Naive thymus-derived CD4-positive, alpha-beta T cell (primary cell): ENCODE measurements at regions of chr17 and their contacts with region 1.

Region 1: DNA sequence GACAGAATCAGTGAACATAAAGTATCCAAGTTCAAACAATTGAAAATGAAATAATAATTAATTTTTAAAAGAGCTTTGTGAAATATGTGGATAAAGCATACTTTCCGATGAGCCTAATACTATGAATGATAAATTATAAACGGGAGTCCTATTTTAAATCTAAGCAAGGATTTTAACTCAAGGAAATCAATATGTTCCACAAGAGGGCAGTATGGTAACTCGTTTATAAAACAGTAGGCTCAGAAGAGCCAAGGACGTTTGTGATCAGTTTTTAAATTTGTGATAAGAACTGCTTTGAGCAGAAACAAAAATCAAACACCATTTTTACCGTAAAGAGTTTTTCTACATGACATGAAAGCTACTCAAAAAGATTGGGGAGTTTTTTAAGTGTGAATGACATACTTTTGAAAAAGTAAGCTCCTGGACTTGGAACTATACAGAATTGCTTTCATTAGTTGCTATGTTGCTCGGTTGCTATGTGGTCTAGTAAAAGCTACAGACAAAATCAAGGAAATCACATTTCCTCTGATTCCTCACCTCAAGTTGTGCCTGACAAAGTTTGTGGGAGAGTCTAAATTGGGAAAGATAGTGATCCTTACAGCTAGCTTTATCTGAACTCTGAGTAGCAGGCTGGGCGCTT is 11.8 kb upstream of the TEKT1 start:
- DNase-seq: peak in 6 of 9 donors; percentile 16 to 50 (median 30)
- ATAC-seq: peak; percentile 70
- H3K4me3 ChIP-seq: no peak overlapping the region
- H3K4me3 Mint-ChIP-seq: no peak overlapping the region
- H3K27ac ChIP-seq: no peak overlapping the region
- H3K27ac Mint-ChIP-seq: no peak overlapping the region
- H3K4me1 ChIP-seq: no peaks in the 10 kb centered on the region
- H3K4me1 Mint-ChIP-seq: peaks cover 0 to 18% (median 0%) of the 10 kb centered on the region in 7 donors
- H3K27me3 ChIP-seq: no peaks in the 10 kb centered on the region
- H3K27me3 Mint-ChIP-seq: peaks cover 27 to 67% (median 43%) of the 10 kb centered on the region in 5 donors

Region 2: DNA sequence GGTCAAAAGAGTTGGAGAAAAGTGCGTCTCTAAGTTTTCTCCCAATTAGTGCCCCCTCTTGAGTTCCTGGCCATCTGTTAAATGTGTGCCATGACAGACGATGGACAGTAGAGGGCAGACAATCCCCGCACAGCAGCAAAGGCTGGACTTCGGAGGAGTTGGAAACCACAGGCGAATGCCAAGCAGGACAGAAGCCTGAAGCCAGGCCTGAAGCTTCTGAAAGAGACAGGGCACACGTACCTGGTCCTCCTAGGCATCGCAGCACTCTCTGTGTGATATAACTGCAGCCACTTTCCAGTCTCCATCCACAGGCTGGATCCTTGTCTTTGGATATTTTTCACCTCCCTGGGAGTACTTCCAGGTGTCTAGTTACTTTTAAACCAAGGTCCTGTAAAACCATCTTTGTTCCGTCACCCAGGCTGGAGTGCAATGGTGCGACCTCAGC is 177.3 kb before region 1 on chr17:
- CTCF ChIA-PET with region 1: interaction called, 7 read pairs
- POLR2A ChIA-PET with region 1: no interaction called
- intact Hi-C with region 1: loop called in 1 of 2 experiments (anchors 10 kb)
- DNase-seq: peak in 3 of 9 donors; percentile 22 to 34 (median 24)
- ATAC-seq: peak; percentile 87
- H3K4me3 ChIP-seq: no peak overlapping the region
- H3K4me3 Mint-ChIP-seq: no peak overlapping the region
- H3K27ac ChIP-seq: no peak overlapping the region
- H3K27ac Mint-ChIP-seq: no peak overlapping the region
- H3K4me1 ChIP-seq: no peaks in the 10 kb centered on the region
- H3K4me1 Mint-ChIP-seq: peaks cover 5 to 25% (median 10%) of the 10 kb centered on the region in 7 donors
- H3K27me3 ChIP-seq: no peaks in the 10 kb centered on the region
- H3K27me3 Mint-ChIP-seq: peaks cover 0 to 15% (median 0%) of the 10 kb centered on the region in 5 donors

Region 3: GRCh38 chr17:6753006-6753445 is 90.3 kb before region 1 on chr17:
- CTCF ChIA-PET with region 1: interaction called, 3 read pairs
- POLR2A ChIA-PET with region 1: no interaction called
- intact Hi-C with region 1: loop called in 1 of 2 experiments (anchors 2 kb)
- DNase-seq: peak in 6 of 9 donors; percentile 4 to 53 (median 36)
- ATAC-seq: no peak
- H3K4me3 ChIP-seq: no peak overlapping the region
- H3K4me3 Mint-ChIP-seq: peak overlapping the region; percentile 13 to 66 (median 44)
- H3K27ac ChIP-seq: peak overlapping the region; percentile 26
- H3K27ac Mint-ChIP-seq: peak overlapping the region; percentile 24 to 100 (median 86)
- H3K4me1 ChIP-seq: peaks cover 26 to 30% of the 10 kb centered on the region in 2 donors
- H3K4me1 Mint-ChIP-seq: peaks cover 37 to 60% (median 48%) of the 10 kb centered on the region in 7 donors
- H3K27me3 ChIP-seq: no peaks in the 10 kb centered on the region
- H3K27me3 Mint-ChIP-seq: peaks cover 0 to 18% (median 0%) of the 10 kb centered on the region in 5 donors

Region 4: DNA sequence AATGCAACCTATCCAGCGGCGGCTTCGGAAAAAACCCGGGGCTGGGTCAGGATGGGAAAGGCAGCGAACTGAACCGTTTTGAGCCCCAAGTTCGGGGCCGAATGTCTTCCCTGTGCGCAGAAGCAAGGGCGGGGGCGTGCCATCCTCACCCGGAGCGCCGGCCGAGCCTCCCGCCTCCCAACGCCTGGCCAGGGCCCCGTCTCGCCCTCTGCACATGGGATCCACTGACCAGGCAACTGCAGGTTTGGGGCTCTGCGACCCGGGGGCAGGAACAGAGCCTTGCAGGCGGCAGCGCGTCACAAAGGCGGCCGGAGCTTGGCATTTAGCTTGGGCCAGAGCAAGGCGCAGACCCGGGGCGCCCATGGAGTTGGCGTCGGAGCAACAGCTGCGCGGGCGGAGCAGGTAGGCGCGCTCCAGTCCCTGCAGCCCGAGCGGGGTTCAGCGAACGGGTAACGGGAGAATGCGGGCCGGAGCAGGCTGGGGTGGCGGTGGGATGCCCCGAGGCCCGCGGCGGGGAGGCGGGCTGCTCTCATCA is 67.4 kb before region 1 on chr17 and contains the start of gene FBXO39:
- CTCF ChIA-PET with region 1: no interaction called
- POLR2A ChIA-PET with region 1: no interaction called
- intact Hi-C with region 1: no loop called
- DNase-seq: no peak
- ATAC-seq: no peak
- H3K4me3 ChIP-seq: no peak within 1 kb of the TSS
- H3K4me3 Mint-ChIP-seq: peak within 1 kb of the TSS in 7 of 10 donors; percentile 11 to 50 (median 39)
- H3K27ac ChIP-seq: no peak within 1 kb of the TSS
- H3K27ac Mint-ChIP-seq: peak within 1 kb of the TSS in 1 of 9 donors; percentile 63
- H3K4me1 ChIP-seq: no peaks in the 10 kb centered on the region
- H3K4me1 Mint-ChIP-seq: peaks cover 0 to 11% (median 6%) of the 10 kb centered on the region in 7 donors
- H3K27me3 ChIP-seq: no peaks in the 10 kb centered on the region
- H3K27me3 Mint-ChIP-seq: peaks cover 0 to 56% (median 35%) of the 10 kb centered on the region in 5 donors
- total RNA-seq, gene FBXO39: 0.30 to 7.4 (median 0.66) TPM

Region 5: DNA sequence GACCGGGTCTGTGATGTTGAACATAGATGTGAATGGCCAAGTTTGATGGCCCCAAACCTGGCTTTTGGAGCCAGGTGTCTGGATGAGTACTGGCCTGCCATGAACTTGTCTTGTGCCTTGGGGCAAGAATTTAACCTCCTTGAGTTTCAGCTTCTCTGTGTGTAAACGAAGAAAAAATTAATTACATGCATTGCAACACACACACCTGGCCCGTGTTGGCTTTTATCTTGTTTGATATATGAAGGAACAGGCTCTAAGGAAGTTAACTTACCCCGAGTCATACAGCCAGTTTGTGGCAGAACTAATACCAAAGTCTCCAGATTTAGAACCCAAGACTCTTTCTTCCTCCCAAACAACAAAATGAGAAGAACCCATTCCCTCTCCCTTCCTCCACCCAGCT is 54.2 kb before region 1 on chr17:
- CTCF ChIA-PET with region 1: no interaction called
- POLR2A ChIA-PET with region 1: no interaction called
- intact Hi-C with region 1: no loop called
- DNase-seq: no peak
- ATAC-seq: no peak
- H3K4me3 ChIP-seq: no peak overlapping the region
- H3K4me3 Mint-ChIP-seq: no peak overlapping the region
- H3K27ac ChIP-seq: no peak overlapping the region
- H3K27ac Mint-ChIP-seq: no peak overlapping the region
- H3K4me1 ChIP-seq: no peaks in the 10 kb centered on the region
- H3K4me1 Mint-ChIP-seq: peaks cover 0 to 10% (median 5%) of the 10 kb centered on the region in 7 donors
- H3K27me3 ChIP-seq: no peaks in the 10 kb centered on the region
- H3K27me3 Mint-ChIP-seq: peaks cover 35 to 70% (median 46%) of the 10 kb centered on the region in 5 donors

Region 6: DNA sequence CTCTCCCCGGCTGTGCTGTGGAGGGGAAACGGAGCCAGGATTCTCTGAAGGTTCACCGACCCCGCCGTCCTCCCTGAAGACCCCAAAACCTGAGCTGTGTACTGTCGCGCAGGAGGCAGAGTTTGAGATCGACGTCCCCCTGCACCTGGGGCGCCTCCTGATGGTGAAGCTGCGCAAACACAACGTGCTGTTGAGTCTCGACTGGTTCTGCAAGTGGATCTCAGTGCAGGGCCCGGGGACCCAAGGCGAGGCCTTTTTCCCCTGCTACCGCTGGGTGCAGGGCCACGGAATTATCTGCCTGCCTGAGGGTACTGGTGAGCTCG is 50.8 kb after region 1 on chr17:
- CTCF ChIA-PET with region 1: interaction called, 5 read pairs
- POLR2A ChIA-PET with region 1: no interaction called
- intact Hi-C with region 1: loop called in 1 of 2 experiments (anchors 10 kb)
- DNase-seq: peak in 2 of 9 donors; percentile 5 to 33
- ATAC-seq: no peak
- H3K4me3 ChIP-seq: no peak overlapping the region
- H3K4me3 Mint-ChIP-seq: peak overlapping the region in 2 of 10 donors; percentile 31 to 48
- H3K27ac ChIP-seq: no peak overlapping the region
- H3K27ac Mint-ChIP-seq: no peak overlapping the region
- H3K4me1 ChIP-seq: no peaks in the 10 kb centered on the region
- H3K4me1 Mint-ChIP-seq: no peaks in the 10 kb centered on the region
- H3K27me3 ChIP-seq: no peaks in the 10 kb centered on the region
- H3K27me3 Mint-ChIP-seq: peaks cover 32 to 59% (median 48%) of the 10 kb centered on the region in 5 donors

Region 7: DNA sequence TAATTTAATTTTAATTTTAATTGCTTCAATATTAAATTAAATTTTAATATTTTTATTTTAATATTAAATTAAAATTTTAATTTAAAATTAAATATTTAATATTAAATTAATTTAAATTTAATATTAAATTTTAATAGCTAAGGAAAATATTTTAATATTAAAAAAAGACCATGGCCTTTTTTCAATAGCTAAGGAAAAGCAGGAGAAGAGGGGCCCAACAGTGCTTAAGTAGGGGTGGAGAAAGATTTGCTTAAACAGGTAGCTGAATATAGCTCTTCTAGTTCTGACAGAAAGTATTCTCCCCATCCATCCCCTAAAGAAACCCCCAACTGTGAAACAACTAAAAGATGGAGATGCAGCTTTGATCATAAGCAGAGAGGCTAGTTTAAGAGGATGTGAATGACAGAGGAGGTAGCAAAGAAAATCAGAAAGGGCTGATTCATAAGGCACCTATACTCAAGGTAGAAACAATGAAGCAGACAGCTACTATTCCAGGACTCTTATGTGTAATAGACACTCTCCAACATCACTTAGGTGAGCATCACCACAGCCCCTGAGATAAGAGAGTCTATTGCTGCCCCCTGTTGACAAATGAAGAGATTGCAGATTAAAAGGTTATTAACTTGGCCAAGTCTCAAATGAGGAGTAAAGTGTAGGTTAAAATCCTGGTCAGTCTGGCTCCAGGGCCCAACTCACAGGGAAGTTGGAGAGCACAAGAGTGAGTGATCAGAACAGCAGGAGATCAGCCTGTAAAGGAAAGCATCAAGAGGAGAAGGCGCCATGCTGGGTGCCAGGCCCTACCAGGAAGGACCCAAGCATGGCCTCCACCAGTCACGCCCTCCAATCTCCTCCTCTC is 161.3 kb after region 1 on chr17:
- CTCF ChIA-PET with region 1: interaction called, 18 read pairs
- POLR2A ChIA-PET with region 1: interaction called, 6 read pairs
- intact Hi-C with region 1: loop called (anchors 1 kb)
- DNase-seq: peak in 7 of 9 donors; percentile 67 to 80 (median 77)
- ATAC-seq: peak; percentile 98
- H3K4me3 ChIP-seq: no peak overlapping the region
- H3K4me3 Mint-ChIP-seq: no peak overlapping the region
- H3K27ac ChIP-seq: no peak overlapping the region
- H3K27ac Mint-ChIP-seq: peak overlapping the region in 8 of 9 donors; percentile 5 to 60 (median 31)
- H3K4me1 ChIP-seq: no peaks in the 10 kb centered on the region
- H3K4me1 Mint-ChIP-seq: peaks cover 14 to 42% (median 27%) of the 10 kb centered on the region in 7 donors
- H3K27me3 ChIP-seq: no peaks in the 10 kb centered on the region
- H3K27me3 Mint-ChIP-seq: no peaks in the 10 kb centered on the region

Region 8: GRCh38 chr17:7021993-7022778 is 178.8 kb after region 1 on chr17:
- CTCF ChIA-PET with region 1: interaction called, 4 read pairs
- POLR2A ChIA-PET with region 1: no interaction called
- intact Hi-C with region 1: loop called in 1 of 2 experiments (anchors 1 kb)
- DNase-seq: peak; percentile 52 to 86 (median 71)
- ATAC-seq: peak; percentile 81
- H3K4me3 ChIP-seq: peak overlapping the region; percentile 44
- H3K4me3 Mint-ChIP-seq: peak overlapping the region; percentile 58 to 84 (median 78)
- H3K27ac ChIP-seq: peak overlapping the region; percentile 48
- H3K27ac Mint-ChIP-seq: peak overlapping the region in 7 of 9 donors; percentile 17 to 92 (median 78)
- H3K4me1 ChIP-seq: peaks cover 21 to 30% of the 10 kb centered on the region in 2 donors
- H3K4me1 Mint-ChIP-seq: peaks cover 17 to 61% (median 30%) of the 10 kb centered on the region in 7 donors
- H3K27me3 ChIP-seq: no peaks in the 10 kb centered on the region
- H3K27me3 Mint-ChIP-seq: no peaks in the 10 kb centered on the region

Region 9: GRCh38 chr17:7136266-7136877 is 293.0 kb after region 1 on chr17:
- CTCF ChIA-PET with region 1: interaction called, 9 read pairs
- POLR2A ChIA-PET with region 1: no interaction called
- intact Hi-C with region 1: loop called in 1 of 2 experiments (anchors 2 kb)
- DNase-seq: peak; percentile 53 to 74 (median 71)
- ATAC-seq: peak; percentile 24
- H3K4me3 ChIP-seq: no peak overlapping the region
- H3K4me3 Mint-ChIP-seq: peak overlapping the region in 4 of 10 donors; percentile 32 to 53 (median 44)
- H3K27ac ChIP-seq: no peak overlapping the region
- H3K27ac Mint-ChIP-seq: peak overlapping the region in 4 of 9 donors; percentile 8 to 48 (median 28)
- H3K4me1 ChIP-seq: peaks cover 6 to 20% of the 10 kb centered on the region in 2 donors
- H3K4me1 Mint-ChIP-seq: peaks cover 13 to 34% (median 23%) of the 10 kb centered on the region in 7 donors
- H3K27me3 ChIP-seq: no peaks in the 10 kb centered on the region
- H3K27me3 Mint-ChIP-seq: peaks cover 0 to 24% (median 6%) of the 10 kb centered on the region in 5 donors